ENCODE measurements at regions of chr2 and their contacts with region 1.

Region 1: DNA sequence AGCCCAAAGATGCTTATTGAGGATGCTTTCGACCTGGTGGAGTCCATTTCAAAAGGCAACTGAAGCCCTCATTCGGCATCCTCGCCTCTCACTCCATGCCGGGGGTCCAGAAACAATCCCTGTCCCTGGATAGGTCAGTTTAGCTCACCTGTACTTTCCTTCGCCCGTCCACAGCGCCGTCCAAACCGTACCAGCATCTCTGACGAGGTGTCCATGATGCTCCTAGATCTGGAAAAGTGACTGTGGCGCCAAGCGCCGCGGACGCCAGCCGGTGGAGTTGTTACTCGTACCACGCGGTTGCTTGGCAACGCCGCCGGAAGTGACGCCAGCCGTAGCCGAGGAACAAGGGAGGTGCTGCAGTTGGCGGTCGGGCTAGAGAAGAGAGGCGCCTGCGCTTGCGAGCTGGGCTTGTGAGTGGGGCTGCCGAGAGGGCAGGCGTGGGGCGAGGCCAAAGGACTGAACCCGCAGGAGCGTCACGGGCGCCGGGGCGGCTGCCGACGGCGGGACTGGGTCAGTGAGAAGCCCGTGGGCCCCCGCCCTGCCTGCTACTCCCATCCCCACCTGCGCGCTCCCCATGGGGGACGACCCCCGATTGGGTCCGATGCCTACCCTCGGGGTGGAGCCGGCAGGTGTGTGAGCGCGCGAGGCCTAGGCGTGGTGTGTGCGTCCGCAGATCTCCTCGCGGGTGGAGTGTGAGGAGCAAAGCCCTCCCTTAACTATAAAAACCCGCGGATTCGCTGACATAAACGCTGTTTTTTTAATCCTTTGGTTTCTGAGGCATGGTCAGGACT is at the starts of genes CFAP210 and PHOSPHO2:
- DNase-seq: peak; percentile 99
- ATAC-seq: peak; percentile 99
- H3K4me3 Mint-ChIP-seq: peak within 1 kb of the TSS; percentile 84
- H3K27ac Mint-ChIP-seq: peak within 1 kb of the TSS; percentile 87
- H3K4me1 Mint-ChIP-seq: peaks cover 16% of the 10 kb centered on the region
- H3K27me3 Mint-ChIP-seq: peaks cover 3% of the 10 kb centered on the region
- total RNA-seq, gene CFAP210: 0.23 TPM in 1 of 2 experiments, not detected in the other
- total RNA-seq, gene PHOSPHO2: 2.2 to 3.5 TPM

Region 2: DNA sequence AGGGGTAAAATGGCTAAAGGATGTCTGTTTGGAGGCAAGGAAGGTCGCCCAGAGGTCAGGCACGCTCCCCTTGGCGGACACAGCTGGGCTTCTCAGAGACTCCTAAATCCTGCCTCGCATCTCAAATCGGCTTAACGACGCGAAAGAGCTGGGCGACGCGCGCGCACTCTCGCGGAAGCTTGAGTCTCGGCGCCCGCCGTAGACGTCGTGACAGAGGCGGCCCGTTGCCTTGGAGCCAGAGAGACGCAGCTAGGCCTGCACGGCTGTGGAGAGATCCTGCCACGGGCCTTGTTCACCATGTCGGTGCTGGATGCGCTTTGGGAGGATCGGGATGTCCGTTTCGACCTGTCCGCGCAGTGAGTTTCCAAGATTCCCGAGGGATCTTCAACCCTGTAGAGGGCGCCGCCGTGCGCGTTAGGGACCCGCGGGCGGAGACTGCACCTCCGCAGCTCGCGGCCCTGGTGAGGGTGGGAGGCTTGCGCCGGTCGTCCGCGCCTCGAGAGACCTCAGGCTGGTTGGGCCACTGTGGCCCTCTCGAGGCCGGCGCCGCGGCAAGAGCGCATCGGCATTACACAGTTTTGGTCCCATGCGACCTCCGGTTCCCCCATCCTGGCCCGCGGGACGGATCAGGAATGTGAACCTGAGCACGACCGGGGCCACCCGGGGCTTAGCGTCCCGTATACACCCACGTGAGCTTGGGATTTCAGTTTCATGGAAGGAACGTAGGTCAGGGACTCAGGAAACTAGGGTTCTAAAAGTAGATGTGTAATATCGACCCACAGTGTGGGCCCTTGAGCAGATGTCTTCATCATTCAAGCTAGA is 214.8 kb before region 1 on chr2 and contains the start of gene BBS5:
- CTCF ChIA-PET with region 1: no interaction called
- POLR2A ChIA-PET with region 1: no interaction called
- intact Hi-C with region 1: loop called in 1 of 2 experiments (anchors 5 kb)
- DNase-seq: peak; percentile 91
- ATAC-seq: peak; percentile 99
- H3K4me3 Mint-ChIP-seq: peak within 1 kb of the TSS; percentile 87
- H3K27ac Mint-ChIP-seq: peak within 1 kb of the TSS; percentile 55
- H3K4me1 Mint-ChIP-seq: peaks cover 14% of the 10 kb centered on the region
- H3K27me3 Mint-ChIP-seq: no peaks in the 10 kb centered on the region
- total RNA-seq, gene BBS5: 2.7 to 3.4 TPM

Region 3: DNA sequence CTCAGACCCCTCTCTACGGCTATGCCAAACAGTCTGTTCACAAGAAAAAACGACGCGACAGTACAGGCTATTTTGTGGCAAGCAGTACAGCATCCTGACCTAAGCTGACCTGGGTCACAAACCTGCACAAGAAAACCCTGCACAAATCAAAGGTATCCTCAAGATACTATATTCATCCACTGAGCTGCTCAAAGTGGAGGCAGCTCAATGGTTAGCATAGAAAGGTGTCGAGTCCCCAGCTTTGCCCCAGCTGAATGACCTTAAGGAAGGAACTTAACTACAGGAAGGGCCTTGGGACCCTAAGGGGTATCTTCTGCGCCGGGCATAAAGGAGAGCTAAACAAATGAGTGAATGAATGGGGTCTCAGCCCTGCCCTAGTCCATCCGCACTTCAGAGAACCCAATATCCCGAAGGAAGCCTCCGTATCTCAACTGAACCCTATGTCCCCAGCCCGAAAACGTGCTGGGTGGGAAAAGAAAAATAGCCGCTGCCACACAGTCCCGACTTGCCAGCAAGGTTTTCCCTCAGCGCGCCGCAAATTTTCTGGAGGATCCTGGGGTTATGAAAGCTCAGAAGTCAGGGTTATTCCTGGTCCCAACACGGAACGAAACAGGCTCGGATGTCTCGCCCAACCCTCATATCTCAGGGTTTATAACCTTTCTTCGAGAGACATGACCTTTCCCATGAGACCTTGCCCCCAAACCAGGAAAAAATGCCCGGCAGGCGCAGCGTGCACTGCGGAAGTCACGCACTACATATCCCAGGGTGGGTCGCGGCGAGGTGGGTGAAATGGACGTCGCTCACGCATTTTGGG is 120.9 kb before region 1 on chr2 and contains the start of gene FASTKD1:
- CTCF ChIA-PET with region 1: no interaction called
- POLR2A ChIA-PET with region 1: no interaction called
- intact Hi-C with region 1: loop called (anchors 1 kb)
- DNase-seq: peak; percentile 94
- ATAC-seq: peak; percentile 100
- H3K4me3 Mint-ChIP-seq: peak within 1 kb of the TSS; percentile 97
- H3K27ac Mint-ChIP-seq: peak within 1 kb of the TSS; percentile 92
- H3K4me1 Mint-ChIP-seq: peaks cover 20% of the 10 kb centered on the region
- H3K27me3 Mint-ChIP-seq: no peaks in the 10 kb centered on the region
- total RNA-seq, gene FASTKD1: 29.8 to 39.7 TPM

Region 4: DNA sequence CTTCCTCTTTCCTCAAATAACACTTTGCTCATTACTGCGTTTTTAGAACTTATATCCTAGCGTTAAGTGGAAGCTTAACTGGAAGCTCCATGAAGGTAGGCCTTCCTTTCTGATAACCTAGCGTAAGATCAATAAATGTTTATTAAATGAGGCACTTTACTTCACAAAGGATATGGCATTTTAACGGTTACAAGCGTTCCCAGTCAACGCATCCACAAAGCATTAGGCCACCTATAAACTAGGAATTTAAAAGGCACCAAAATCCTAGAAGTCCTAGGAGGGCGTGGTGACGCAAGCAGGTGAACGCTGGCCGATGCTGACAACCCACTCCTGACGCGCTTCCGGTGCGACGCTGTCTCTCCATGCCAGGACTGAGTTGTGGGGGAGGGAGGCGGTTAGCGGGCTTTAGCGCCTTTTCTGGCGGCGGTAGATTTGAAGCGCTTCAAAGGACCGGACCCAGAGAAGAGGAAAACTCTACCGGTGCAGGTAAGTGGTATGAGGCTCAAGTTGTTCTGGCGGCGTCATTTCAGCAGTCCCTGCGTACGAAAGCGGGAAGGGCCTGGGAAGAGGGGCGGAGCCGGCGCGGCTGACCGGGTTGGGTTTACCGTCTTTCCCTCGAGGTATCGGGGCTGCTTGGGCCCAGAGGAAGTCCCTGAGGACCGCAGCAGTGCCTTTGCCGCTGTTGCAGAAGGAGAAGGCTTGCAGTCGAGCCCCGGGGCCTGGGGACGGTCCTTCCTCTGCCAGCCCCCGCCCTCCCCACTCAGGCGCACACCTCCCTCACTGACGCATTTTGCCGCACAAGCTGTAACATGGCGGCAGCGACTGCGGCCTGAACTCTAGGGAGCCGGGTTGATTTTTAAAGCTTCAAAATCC is 110.1 kb before region 1 on chr2 and contains the start of gene PPIG:
- CTCF ChIA-PET with region 1: no interaction called
- POLR2A ChIA-PET with region 1: no interaction called
- intact Hi-C with region 1: loop called (anchors 1 to 2 kb)
- DNase-seq: peak; percentile 94
- ATAC-seq: peak; percentile 93
- H3K4me3 Mint-ChIP-seq: peak within 1 kb of the TSS; percentile 99
- H3K27ac Mint-ChIP-seq: peak within 1 kb of the TSS; percentile 99
- H3K4me1 Mint-ChIP-seq: peaks cover 34% of the 10 kb centered on the region
- H3K27me3 Mint-ChIP-seq: no peaks in the 10 kb centered on the region
- total RNA-seq, gene PPIG: 57.6 to 58.6 TPM

Region 5: GRCh38 chr2:169619946-169620345 is 74.4 kb before region 1 on chr2:
- CTCF ChIA-PET with region 1: no interaction called
- POLR2A ChIA-PET with region 1: no interaction called
- intact Hi-C with region 1: no loop called
- DNase-seq: no peak
- ATAC-seq: no peak
- H3K4me3 Mint-ChIP-seq: no peak overlapping the region
- H3K27ac Mint-ChIP-seq: no peak overlapping the region
- H3K4me1 Mint-ChIP-seq: peaks cover 18% of the 10 kb centered on the region
- H3K27me3 Mint-ChIP-seq: no peaks in the 10 kb centered on the region

Region 6: GRCh38 chr2:169683054-169683424 is 11.3 kb before region 1 on chr2:
- CTCF ChIA-PET with region 1: interaction called, 5 read pairs
- POLR2A ChIA-PET with region 1: interaction called, 4 read pairs
- intact Hi-C with region 1: loop called in 1 of 2 experiments (anchors 1 kb)
- DNase-seq: peak; percentile 40
- ATAC-seq: peak; percentile 98
- H3K4me3 Mint-ChIP-seq: no peak overlapping the region
- H3K27ac Mint-ChIP-seq: peak overlapping the region; percentile 78
- H3K4me1 Mint-ChIP-seq: peaks cover 15% of the 10 kb centered on the region
- H3K27me3 Mint-ChIP-seq: peaks cover 2% of the 10 kb centered on the region

Region 7: DNA sequence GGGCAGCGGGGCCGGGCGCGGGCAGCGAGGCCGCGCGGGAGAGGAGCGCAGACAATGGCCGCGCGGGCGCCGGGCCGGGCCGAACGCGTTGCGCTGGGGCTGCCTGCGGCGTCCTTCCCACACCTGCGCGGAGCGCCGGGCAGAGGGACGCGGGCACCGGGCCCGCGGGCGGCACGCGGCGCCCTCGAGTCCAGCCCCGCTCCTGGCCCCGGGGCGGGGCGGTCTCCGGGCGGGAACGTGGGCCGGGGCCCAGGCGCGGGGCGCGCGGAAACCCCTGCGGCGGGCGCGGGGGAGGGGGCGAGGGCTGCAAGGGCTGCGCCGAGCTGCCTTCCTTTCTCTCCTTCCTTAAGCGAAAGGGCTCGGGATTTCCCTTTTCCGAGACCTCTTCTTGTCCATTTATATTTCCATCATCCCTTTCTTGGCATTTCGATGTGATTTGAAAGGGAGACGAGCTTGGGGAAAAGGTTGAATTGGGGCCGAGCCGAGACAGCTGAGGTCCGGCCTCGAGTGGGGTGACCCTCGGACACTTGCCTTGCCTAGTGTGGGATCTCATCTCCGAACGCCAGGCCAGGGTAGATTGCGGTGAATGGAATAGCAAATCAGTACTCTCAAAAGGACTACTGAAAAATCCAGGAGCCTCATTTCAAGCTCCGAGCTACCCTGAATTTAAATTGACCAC is 40.0 kb after region 1 on chr2:
- CTCF ChIA-PET with region 1: no interaction called
- POLR2A ChIA-PET with region 1: no interaction called
- intact Hi-C with region 1: loop called in 1 of 2 experiments (anchors 1 kb)
- DNase-seq: peak; percentile 42
- ATAC-seq: peak; percentile 51
- H3K4me3 Mint-ChIP-seq: peak overlapping the region; percentile 78
- H3K27ac Mint-ChIP-seq: no peak overlapping the region
- H3K4me1 Mint-ChIP-seq: peaks cover 4% of the 10 kb centered on the region
- H3K27me3 Mint-ChIP-seq: peaks cover 31% of the 10 kb centered on the region

Region 8: DNA sequence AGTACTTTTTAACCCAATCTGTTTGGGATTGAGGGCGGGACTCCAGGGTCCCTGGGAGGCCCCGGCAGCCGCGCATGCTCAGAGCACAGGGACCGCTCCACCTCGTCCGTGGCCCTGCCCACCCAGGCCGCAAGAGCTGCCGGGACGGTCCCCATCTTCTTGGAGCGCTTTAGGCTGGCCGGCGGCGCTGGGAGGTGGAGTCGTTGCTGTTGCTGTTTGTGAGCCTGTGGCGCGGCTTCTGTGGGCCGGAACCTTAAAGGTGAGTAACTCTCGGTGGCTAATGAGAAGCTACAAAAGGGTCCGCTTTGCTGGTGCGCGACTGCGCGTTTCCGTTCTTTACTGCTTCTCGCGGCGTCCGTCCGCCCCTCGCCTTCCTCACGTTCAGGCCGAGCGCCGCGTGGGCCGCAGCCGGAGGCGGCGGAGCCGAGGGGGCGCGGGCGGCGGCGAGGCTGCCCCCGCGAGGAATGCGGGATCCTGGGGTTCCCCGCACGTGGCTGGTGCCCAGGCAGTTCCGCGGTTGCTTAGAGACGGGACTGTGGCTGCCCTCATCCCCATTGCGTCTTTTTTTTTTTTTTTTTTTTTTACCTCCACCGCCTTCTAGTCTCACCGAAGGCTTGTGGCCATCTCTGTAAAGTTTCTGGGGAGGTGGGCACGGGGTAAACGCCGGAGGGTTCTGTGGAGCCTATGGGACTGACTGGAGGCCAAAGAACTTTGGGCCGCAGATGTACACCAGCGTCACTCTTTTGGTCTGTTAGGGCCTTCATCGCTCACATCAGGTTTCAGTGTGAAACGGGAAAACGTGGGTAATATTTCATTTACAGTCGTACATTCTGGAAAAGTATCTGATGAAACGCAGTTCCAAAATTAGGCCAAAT is 104.6 kb after region 1 on chr2 and contains the start of gene SSB:
- CTCF ChIA-PET with region 1: no interaction called
- POLR2A ChIA-PET with region 1: no interaction called
- intact Hi-C with region 1: loop called (anchors 1 to 2 kb)
- DNase-seq: peak; percentile 98
- ATAC-seq: peak; percentile 98
- H3K4me3 Mint-ChIP-seq: peak within 1 kb of the TSS; percentile 93
- H3K27ac Mint-ChIP-seq: peak within 1 kb of the TSS; percentile 91
- H3K4me1 Mint-ChIP-seq: peaks cover 22% of the 10 kb centered on the region
- H3K27me3 Mint-ChIP-seq: no peaks in the 10 kb centered on the region
- total RNA-seq, gene SSB: 127 to 138 TPM